ENCODE measurements at regions of chr3 and their contacts with region 1.

Region 1: GRCh38 chr3:43855674-43856299 is 165.0 kb downstream of the ABHD5 start:
- DNase-seq: peak; percentile 51 to 81 (median 75)
- H3K4me3 ChIP-seq: no peak overlapping the region
- H3K27ac ChIP-seq: no peak overlapping the region
- H3K4me1 ChIP-seq: peaks cover 0 to 3% (median 0%) of the 10 kb centered on the region in 4 experiments
- H3K27me3 ChIP-seq: peaks cover 0 to 41% (median 18%) of the 10 kb centered on the region in 5 experiments

Region 2: DNA sequence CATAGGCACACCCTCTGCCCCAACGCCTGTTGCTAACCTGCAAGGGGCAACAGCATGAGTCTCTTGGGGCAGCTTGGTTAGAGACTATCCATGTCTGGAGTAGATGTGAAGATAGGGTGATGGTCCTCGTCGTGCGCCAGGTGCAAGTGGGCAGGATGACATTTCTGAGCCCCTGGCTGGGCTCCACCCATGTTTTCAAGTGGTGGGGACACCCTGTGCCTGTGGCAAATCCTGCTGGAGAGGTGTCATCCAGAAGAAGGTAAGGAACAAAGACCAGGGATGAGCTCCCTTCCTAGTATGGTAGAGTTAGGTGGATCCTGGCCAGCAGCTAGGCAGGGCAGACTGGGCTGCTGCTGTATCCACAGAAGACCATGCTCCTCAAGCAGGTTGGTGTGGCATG is 12.4 kb before region 1 on chr3:
- CTCF ChIA-PET with region 1: interaction called, 33 read pairs
- POLR2A ChIA-PET with region 1: no interaction called
- DNase-seq: no peak
- H3K4me3 ChIP-seq: no peak overlapping the region
- H3K27ac ChIP-seq: no peak overlapping the region
- H3K4me1 ChIP-seq: no peaks in the 10 kb centered on the region
- H3K27me3 ChIP-seq: peaks cover 0 to 4% (median 0%) of the 10 kb centered on the region in 5 experiments

Region 3: DNA sequence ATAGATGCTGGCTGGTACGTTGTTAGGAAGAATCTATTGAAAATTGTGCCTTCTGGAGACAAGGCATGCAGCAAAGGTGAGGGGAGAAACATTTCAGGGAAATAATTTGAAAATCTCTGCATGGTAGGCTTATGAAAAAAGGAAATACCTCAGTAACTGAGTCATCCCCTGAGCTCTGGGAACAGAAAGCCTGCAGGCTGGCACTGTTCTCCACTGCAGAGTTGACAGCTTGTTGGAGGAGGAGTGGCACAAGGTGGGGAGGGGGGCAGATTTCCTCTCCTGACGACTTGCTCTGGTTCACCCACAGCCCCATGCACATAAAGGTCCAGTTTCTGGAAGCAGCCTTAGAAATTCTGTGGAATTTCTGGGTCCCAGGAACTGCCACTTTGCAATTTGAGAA is 14.3 kb after region 1 on chr3:
- CTCF ChIA-PET with region 1: interaction called, 21 read pairs
- POLR2A ChIA-PET with region 1: interaction called, 4 read pairs
- DNase-seq: no peak
- H3K4me3 ChIP-seq: no peak overlapping the region
- H3K27ac ChIP-seq: no peak overlapping the region
- H3K4me1 ChIP-seq: peaks cover 0 to 10% (median 6%) of the 10 kb centered on the region in 4 experiments
- H3K27me3 ChIP-seq: peaks cover 0 to 9% (median 0%) of the 10 kb centered on the region in 5 experiments

Region 4: GRCh38 chr3:43919029-43919428 is 63.2 kb after region 1 on chr3:
- CTCF ChIA-PET with region 1: no interaction called
- POLR2A ChIA-PET with region 1: no interaction called
- DNase-seq: no peak
- H3K4me3 ChIP-seq: no peak overlapping the region
- H3K27ac ChIP-seq: no peak overlapping the region
- H3K4me1 ChIP-seq: peaks cover 0 to 13% (median 11%) of the 10 kb centered on the region in 4 experiments
- H3K27me3 ChIP-seq: peaks cover 0 to 5% (median 0%) of the 10 kb centered on the region in 5 experiments

Region 5: GRCh38 chr3:44198284-44199269 is 342.8 kb after region 1 on chr3:
- CTCF ChIA-PET with region 1: interaction called, 18 read pairs
- POLR2A ChIA-PET with region 1: no interaction called
- DNase-seq: peak; percentile 67 to 86 (median 81)
- H3K4me3 ChIP-seq: no peak overlapping the region
- H3K27ac ChIP-seq: no peak overlapping the region
- H3K4me1 ChIP-seq: peaks cover 0 to 4% (median 0%) of the 10 kb centered on the region in 4 experiments
- H3K27me3 ChIP-seq: no peaks in the 10 kb centered on the region